ENCODE measurements at regions of chr18 and their contacts with region 1.

Region 1: DNA sequence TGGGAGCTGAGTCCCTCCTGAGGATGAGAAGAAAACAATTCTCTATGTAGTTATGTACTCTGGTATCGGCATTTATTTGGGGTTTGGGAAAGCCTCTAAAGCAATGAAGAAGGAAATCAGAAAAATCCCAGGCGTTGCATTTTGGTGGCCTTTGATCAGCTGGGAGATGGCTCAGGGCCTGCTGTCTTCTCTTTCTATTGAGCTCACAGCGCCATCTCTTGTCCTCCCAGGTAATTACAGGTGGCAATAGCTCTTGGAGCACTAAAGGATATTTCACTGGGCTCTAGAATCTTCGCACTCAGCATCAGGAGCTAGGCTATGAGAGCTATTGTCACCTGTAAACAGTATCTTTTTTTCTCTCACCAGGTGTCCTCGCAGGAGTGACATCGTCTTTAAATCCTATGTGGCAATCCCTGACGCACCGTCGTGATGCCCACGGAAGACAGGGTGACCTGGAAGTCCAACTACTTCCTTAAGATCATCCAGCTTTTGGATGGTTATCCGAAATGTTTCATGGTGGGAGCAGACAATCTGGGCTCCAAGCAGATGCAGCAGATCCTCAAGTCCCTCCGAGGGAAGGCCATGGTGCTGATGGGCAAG is 76.1 kb upstream of the PMAIP1 start:
- DNase-seq: peak; percentile 69
- H3K4me3 ChIP-seq: no peak overlapping the region
- H3K27ac ChIP-seq: no peak overlapping the region
- H3K4me1 ChIP-seq: no peaks in the 10 kb centered on the region
- H3K27me3 ChIP-seq: no peaks in the 10 kb centered on the region
- CTCF ChIP-seq: peak; percentile 79

Region 2: GRCh38 chr18:59459369-59460079 is 364.2 kb before region 1 on chr18:
- intact Hi-C with region 1: loop called (anchors 2 kb)
- DNase-seq: no peak
- H3K4me3 ChIP-seq: no peak overlapping the region
- H3K27ac ChIP-seq: no peak overlapping the region
- H3K4me1 ChIP-seq: no peaks in the 10 kb centered on the region
- H3K27me3 ChIP-seq: no peaks in the 10 kb centered on the region
- CTCF ChIP-seq: peak; percentile 33

Region 3: GRCh38 chr18:59631583-59632181 is 192.0 kb before region 1 on chr18:
- intact Hi-C with region 1: loop called (anchors 5 kb)
- DNase-seq: no peak
- H3K4me3 ChIP-seq: no peak overlapping the region
- H3K27ac ChIP-seq: no peak overlapping the region
- H3K4me1 ChIP-seq: no peaks in the 10 kb centered on the region
- H3K27me3 ChIP-seq: no peaks in the 10 kb centered on the region
- CTCF ChIP-seq: peak; percentile 35

Region 4: GRCh38 chr18:59697236-59697932 is 126.3 kb before region 1 on chr18 and contains the start of gene CCBE1:
- intact Hi-C with region 1: loop called (anchors 10 kb)
- DNase-seq: peak; percentile 73
- H3K4me3 ChIP-seq: peak within 1 kb of the TSS; percentile 40
- H3K27ac ChIP-seq: no peak within 1 kb of the TSS
- H3K4me1 ChIP-seq: no peaks in the 10 kb centered on the region
- H3K27me3 ChIP-seq: peaks cover 21% of the 10 kb centered on the region
- CTCF ChIP-seq: peak; percentile 89
- total RNA-seq, gene CCBE1: 0.27 to 3.1 TPM

Measured in colonic mucosa (tissue), 4 donors.